Prostate gland (tissue), 2 donors: ENCODE measurements at regions of chr1 and their contacts with region 1.

Region 1: GRCh38 chr1:54547601-54548388 is at the start of gene ACOT11:
- DNase-seq: peak; percentile 77
- H3K4me3 ChIP-seq: peak within 1 kb of the TSS; percentile 19 to 20
- H3K27ac ChIP-seq: peak within 1 kb of the TSS; percentile 70 to 78
- H3K4me1 ChIP-seq: no peaks in the 10 kb centered on the region
- H3K27me3 ChIP-seq: no peaks in the 10 kb centered on the region
- CTCF ChIP-seq: peak in 2 of 4 experiments; percentile 53 to 84
- POLR2A ChIP-seq: peak; percentile 32
- total RNA-seq, gene ACOT11: 6.7 to 18.6 TPM

Region 2: GRCh38 chr1:54581621-54582035 is 33.8 kb after region 1 on chr1:
- intact Hi-C with region 1: loop called (anchors 2 kb)
- DNase-seq: peak; percentile 96
- H3K4me3 ChIP-seq: no peak overlapping the region
- H3K27ac ChIP-seq: peak overlapping the region; percentile 74 to 79
- H3K4me1 ChIP-seq: no peaks in the 10 kb centered on the region
- H3K27me3 ChIP-seq: no peaks in the 10 kb centered on the region
- CTCF ChIP-seq: peak in 1 of 4 experiments; percentile 27
- POLR2A ChIP-seq: peak; percentile 86